ENCODE measurements at regions of chr1 and their contacts with region 1.

Region 1: GRCh38 chr1:94247138-94248094 is 10.0 kb upstream of the ARHGAP29 start:
- DNase-seq: peak; percentile 78 to 93
- H3K4me3 ChIP-seq: peak overlapping the region; percentile 84
- H3K27ac ChIP-seq: peak overlapping the region; percentile 91
- H3K4me1 ChIP-seq: peaks cover 70% of the 10 kb centered on the region
- H3K27me3 ChIP-seq: no peaks in the 10 kb centered on the region
- CTCF ChIP-seq: no peak

Region 2: DNA sequence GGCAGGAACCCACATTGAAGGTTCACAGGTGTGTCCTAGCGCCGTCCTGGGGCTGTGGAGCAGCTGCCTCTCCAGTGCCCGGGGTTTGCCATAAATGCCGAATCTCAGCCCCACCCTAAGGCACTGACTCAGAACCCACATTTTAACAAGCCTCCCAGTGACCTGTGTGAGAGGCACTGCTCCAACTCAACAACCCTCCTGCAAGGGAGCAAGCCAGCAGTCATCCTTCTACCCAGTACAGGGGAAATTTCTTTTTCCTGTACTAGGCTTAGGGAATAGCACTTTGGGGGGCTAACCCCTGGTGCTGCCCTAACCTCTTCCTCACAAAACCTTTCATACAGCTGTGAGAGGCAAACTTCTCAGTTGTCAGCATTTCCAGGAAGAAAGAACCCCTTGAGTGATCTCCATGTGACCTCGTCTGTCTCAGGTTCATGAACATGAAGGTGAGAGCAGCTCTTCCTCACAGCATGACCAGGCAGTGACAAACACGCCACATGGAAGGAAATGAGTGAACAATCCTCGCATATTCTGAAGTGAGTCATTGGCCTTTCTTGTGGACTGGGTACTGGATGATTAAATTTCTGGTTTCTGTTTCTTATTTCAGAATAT is 554.3 kb before region 1 on chr1:
- CTCF ChIA-PET with region 1: interaction called, 11 read pairs
- POLR2A ChIA-PET with region 1: no interaction called
- intact Hi-C with region 1: no loop called
- DNase-seq: peak; percentile 74 to 98
- H3K4me3 ChIP-seq: peak overlapping the region; percentile 43
- H3K27ac ChIP-seq: peak overlapping the region; percentile 99
- H3K4me1 ChIP-seq: peaks cover 75% of the 10 kb centered on the region
- H3K27me3 ChIP-seq: no peaks in the 10 kb centered on the region
- CTCF ChIP-seq: no peak

Region 3: GRCh38 chr1:94169126-94169525 is 78.3 kb before region 1 on chr1:
- CTCF ChIA-PET with region 1: no interaction called
- POLR2A ChIA-PET with region 1: no interaction called
- intact Hi-C with region 1: no loop called
- DNase-seq: no peak
- H3K4me3 ChIP-seq: no peak overlapping the region
- H3K27ac ChIP-seq: no peak overlapping the region
- H3K4me1 ChIP-seq: no peaks in the 10 kb centered on the region
- H3K27me3 ChIP-seq: no peaks in the 10 kb centered on the region
- CTCF ChIP-seq: no peak

Region 4: GRCh38 chr1:94258873-94259331 is 11.5 kb after region 1 on chr1:
- CTCF ChIA-PET with region 1: no interaction called
- POLR2A ChIA-PET with region 1: interaction called, 10 read pairs
- intact Hi-C with region 1: loop called (anchors 1 kb)
- DNase-seq: peak; percentile 91 to 100
- H3K4me3 ChIP-seq: peak overlapping the region; percentile 13; the same call in 1 of the 2 replicates
- H3K27ac ChIP-seq: peak overlapping the region; percentile 98
- H3K4me1 ChIP-seq: peaks cover 74% of the 10 kb centered on the region
- H3K27me3 ChIP-seq: no peaks in the 10 kb centered on the region
- CTCF ChIP-seq: no peak

Region 5: GRCh38 chr1:94322696-94323095 is 75.3 kb after region 1 on chr1:
- CTCF ChIA-PET with region 1: no interaction called
- POLR2A ChIA-PET with region 1: interaction called, 5 read pairs
- intact Hi-C with region 1: loop called (anchors 1 kb)
- DNase-seq: peak; percentile 80 to 99
- H3K4me3 ChIP-seq: peak overlapping the region; percentile 39; the same call in 1 of the 2 replicates
- H3K27ac ChIP-seq: peak overlapping the region; percentile 97
- H3K4me1 ChIP-seq: peaks cover 78% of the 10 kb centered on the region
- H3K27me3 ChIP-seq: no peaks in the 10 kb centered on the region
- CTCF ChIP-seq: 0 out of 2 replicates have a peak, but pooled peaks have one; percentile 43